Heart right ventricle (tissue), 16 donors: ENCODE measurements at regions of chr13 and their contacts with region 1.

Region 1: DNA sequence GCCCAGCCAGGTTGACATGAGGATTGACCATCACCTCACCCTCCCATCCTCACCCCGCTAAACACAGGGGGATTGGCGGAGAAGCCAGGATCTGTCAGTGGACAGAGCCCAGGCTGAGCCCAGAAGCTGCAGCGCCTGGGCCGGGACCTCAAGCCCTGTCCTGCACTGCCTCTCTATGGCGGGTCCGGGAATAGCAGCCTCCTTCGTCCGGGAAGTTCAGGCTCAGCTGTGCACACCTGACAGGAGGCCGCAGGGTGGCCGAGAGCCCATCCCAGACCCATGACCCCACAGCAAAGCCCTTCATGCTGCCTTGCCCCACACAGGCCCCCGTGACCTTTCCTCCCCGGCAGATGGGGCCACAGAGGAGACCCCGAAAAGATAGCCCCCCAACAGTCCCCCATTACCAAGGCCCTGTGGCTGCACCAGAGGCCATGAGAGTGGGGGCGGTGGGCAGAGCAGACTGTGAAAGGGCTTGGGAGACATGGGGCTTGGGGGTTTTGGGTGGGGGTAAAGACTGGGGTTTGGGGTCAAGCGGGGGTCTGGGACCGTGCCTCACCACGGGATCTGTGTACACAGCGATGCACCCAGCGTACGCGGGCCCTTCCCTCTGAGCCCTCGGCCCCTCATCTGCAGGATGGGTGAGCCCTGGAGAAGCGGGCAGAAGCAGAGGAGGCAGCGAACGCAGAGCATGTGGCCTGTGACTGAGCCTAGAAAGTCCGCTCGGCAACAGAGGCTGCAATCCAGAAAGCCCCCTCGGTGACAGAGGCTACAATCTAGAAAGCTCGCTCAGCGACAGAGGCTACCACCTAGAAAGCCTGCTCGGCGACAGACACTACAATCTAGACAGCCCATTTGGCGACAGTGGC is 68.1 kb downstream of the SPACA7 start:
- DNase-seq: peak; percentile 46 to 62
- ATAC-seq: peak; percentile 67 to 84 (median 72)
- H3K4me3 ChIP-seq: no peak overlapping the region
- H3K27ac ChIP-seq: no peak overlapping the region
- H3K4me1 ChIP-seq: peaks cover 0 to 10% (median 0%) of the 10 kb centered on the region in 9 donors
- H3K27me3 ChIP-seq: peaks cover 17 to 82% (median 64%) of the 10 kb centered on the region in 7 donors
- CTCF ChIP-seq: peak; percentile 80 to 88 (median 85)

Region 2: GRCh38 chr13:111474136-111475002 is 969.9 kb before region 1 on chr13:
- intact Hi-C with region 1: loop called (anchors 1 to 5 kb)
- DNase-seq: no peak
- ATAC-seq: peak in 5 of 8 donors; percentile 19 to 72 (median 43)
- H3K4me3 ChIP-seq: no peak overlapping the region
- H3K27ac ChIP-seq: no peak overlapping the region
- H3K4me1 ChIP-seq: no peaks in the 10 kb centered on the region
- H3K27me3 ChIP-seq: peaks cover 0 to 29% (median 3%) of the 10 kb centered on the region in 7 donors
- CTCF ChIP-seq: peak; percentile 16 to 69 (median 58)

Region 3: GRCh38 chr13:111531505-111531904 is 912.7 kb before region 1 on chr13:
- intact Hi-C with region 1: loop called in 3 of 10 experiments (anchors 5 to 10 kb)
- DNase-seq: no peak
- ATAC-seq: peak in 2 of 8 donors; percentile 38 to 52
- H3K4me3 ChIP-seq: no peak overlapping the region
- H3K27ac ChIP-seq: no peak overlapping the region
- H3K4me1 ChIP-seq: peaks cover 0 to 12% (median 0%) of the 10 kb centered on the region in 9 donors
- H3K27me3 ChIP-seq: peaks cover 0 to 77% (median 72%) of the 10 kb centered on the region in 7 donors
- CTCF ChIP-seq: peak in 6 of 9 donors; percentile 27 to 58 (median 40)

Region 4: DNA sequence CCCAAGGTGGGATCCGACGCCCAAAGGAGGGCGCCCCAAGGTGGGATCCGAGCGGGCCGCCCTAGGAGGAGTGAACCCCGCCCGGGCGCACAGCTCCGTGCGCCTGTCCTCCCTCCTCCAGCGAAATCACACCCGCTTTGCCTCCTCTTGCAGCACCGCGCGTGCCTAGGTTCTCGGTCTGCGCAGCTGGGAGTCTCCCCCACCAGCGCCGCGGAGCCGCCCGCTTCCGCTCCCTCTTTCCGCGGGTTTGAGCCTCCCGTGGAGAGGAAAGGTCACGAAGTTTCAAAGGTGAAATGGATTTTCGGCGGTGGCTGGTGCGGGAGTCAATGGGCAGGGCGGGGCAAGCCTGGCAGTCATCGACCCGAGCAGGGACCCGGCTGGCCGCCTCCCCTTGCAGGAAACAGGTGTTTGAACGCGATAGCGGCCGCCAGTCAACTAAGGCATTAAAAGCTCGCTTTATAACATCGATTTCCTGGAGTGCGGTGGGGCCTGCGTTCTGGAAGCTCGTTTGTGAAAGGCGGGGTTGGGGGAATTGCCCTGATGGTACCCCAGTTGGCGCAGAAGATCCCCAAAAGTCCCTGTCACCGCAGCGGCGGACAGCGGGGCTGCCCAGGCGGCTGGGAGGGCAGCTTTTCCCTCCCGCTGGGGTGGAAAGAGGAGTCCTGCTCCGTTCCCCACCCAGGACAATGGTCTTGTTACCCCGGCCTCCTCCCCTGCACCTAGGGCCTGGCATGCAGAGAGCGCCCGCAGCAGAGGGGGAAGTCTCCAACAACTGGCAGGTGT is 386.3 kb before region 1 on chr13:
- intact Hi-C with region 1: loop called in 1 of 10 experiments (anchors 10 kb)
- DNase-seq: no peak
- ATAC-seq: no peak
- H3K4me3 ChIP-seq: no peak overlapping the region
- H3K27ac ChIP-seq: no peak overlapping the region
- H3K4me1 ChIP-seq: peaks cover 7 to 42% (median 30%) of the 10 kb centered on the region in 9 donors
- H3K27me3 ChIP-seq: peaks cover 78 to 100% (median 100%) of the 10 kb centered on the region in 7 donors
- CTCF ChIP-seq: no peak

Region 5: GRCh38 chr13:112102243-112102642 is 342.0 kb before region 1 on chr13:
- intact Hi-C with region 1: loop called in 1 of 10 experiments (anchors 10 kb)
- DNase-seq: no peak
- ATAC-seq: no peak
- H3K4me3 ChIP-seq: no peak overlapping the region
- H3K27ac ChIP-seq: no peak overlapping the region
- H3K4me1 ChIP-seq: peaks cover 0 to 18% (median 0%) of the 10 kb centered on the region in 9 donors
- H3K27me3 ChIP-seq: peaks cover 27 to 97% (median 90%) of the 10 kb centered on the region in 7 donors
- CTCF ChIP-seq: peak in 3 of 9 donors; percentile 15 to 27 (median 23)